Heart right ventricle (tissue), 16 donors: ENCODE measurements at regions of chr6 and their contacts with region 1.

Region 1: DNA sequence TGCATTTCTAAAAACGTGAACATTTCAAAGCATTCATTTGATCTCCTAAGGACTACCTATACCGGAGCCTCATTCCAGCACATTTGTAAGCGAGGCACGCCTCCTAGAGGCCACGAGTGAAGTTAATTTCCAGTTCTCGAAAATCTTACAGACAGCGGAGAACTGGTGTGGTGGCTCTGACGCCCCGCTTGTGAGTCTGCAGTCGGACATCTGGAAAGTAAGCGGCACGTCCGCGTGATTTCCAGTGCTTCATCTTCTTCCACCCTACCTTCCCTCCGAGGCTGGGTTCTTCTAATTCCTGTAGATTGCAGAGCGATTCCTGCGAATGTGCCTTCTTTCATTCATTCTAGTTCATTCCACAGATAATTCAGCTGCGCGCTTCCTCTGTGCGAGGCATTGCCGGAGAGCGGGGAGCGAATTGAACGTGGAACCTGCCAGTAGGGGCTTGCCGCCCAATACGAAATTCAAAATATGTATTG is 810 bp upstream of the PRIM2 start:
- DNase-seq: peak; percentile 74 to 80
- ATAC-seq: peak; percentile 91 to 97 (median 94)
- H3K4me3 ChIP-seq: peak overlapping the region; percentile 50 to 94 (median 64)
- H3K27ac ChIP-seq: peak overlapping the region; percentile 14 to 75 (median 56)
- H3K4me1 ChIP-seq: peaks cover 4 to 28% (median 17%) of the 10 kb centered on the region in 9 donors
- H3K27me3 ChIP-seq: no peaks in the 10 kb centered on the region
- CTCF ChIP-seq: peak; percentile 58 to 92 (median 81)

Region 2: GRCh38 chr6:56909115-56909900 is 407.3 kb before region 1 on chr6:
- intact Hi-C with region 1: loop called in 6 of 10 experiments (anchors 2 to 5 kb)
- DNase-seq: no peak
- ATAC-seq: no peak
- H3K4me3 ChIP-seq: no peak overlapping the region
- H3K27ac ChIP-seq: no peak overlapping the region
- H3K4me1 ChIP-seq: peaks cover 0 to 11% (median 0%) of the 10 kb centered on the region in 9 donors
- H3K27me3 ChIP-seq: no peaks in the 10 kb centered on the region
- CTCF ChIP-seq: no peak

Region 3: DNA sequence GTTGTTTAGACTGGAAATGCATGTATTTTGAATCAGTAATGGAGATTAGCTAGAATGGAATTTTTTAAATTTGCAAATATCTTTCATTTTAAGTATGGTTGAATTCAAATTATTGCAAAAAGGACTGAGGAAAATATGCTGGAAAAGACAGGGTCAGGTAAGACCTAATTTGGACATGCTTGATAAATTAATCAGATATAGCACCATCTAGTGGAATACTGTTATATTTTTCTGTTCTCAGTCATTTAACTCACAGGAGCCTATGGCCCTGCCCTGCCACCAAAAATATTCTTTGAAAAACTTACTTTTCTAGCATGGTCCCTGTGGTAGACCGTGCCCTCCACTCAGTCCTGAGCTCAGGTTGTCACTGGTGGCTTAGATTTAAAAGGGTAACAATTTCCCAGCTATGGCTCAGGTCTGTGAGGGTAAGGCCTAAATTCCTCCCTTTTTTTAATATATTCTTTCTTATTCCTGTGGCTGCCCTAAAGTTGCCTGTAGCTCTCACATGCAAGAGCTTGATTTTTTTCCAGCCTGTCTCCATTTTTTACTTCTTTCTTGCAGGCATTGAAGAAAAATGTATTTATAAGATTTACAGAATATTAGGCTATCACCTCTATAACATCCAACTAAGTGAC is 295.4 kb before region 1 on chr6:
- intact Hi-C with region 1: loop called in 4 of 10 experiments (anchors 10 kb)
- DNase-seq: no peak
- ATAC-seq: no peak
- H3K4me3 ChIP-seq: no peak overlapping the region
- H3K27ac ChIP-seq: no peak overlapping the region
- H3K4me1 ChIP-seq: no peaks in the 10 kb centered on the region
- H3K27me3 ChIP-seq: no peaks in the 10 kb centered on the region
- CTCF ChIP-seq: peak; percentile 22 to 70 (median 63)

Region 4: DNA sequence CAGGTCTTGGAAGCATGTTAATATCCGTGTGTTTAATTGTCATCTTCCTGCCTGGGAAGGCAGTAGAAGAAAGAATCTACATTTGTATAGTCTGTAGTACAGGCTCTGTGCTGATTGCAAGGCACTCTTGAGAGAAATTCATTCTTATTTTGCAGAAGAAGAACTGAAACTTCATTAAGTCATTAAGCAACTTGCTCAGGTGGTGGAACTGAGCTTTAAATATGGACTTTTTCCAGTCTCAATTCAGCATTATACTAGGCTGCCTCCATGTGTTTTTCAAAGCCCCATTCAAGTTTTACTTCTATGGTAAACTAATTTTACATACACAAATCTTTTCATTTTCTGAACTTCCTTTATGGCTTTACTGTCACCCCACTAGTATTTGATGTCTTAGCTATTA is 207.9 kb before region 1 on chr6:
- intact Hi-C with region 1: no loop called
- DNase-seq: no peak
- ATAC-seq: no peak
- H3K4me3 ChIP-seq: no peak overlapping the region
- H3K27ac ChIP-seq: no peak overlapping the region
- H3K4me1 ChIP-seq: peaks cover 0 to 32% (median 0%) of the 10 kb centered on the region in 9 donors
- H3K27me3 ChIP-seq: no peaks in the 10 kb centered on the region
- CTCF ChIP-seq: no peak

Region 5: GRCh38 chr6:57158658-57159057 is 158.0 kb before region 1 on chr6:
- intact Hi-C with region 1: loop called in 1 of 10 experiments (anchors 10 kb)
- DNase-seq: no peak
- ATAC-seq: no peak
- H3K4me3 ChIP-seq: no peak overlapping the region
- H3K27ac ChIP-seq: no peak overlapping the region
- H3K4me1 ChIP-seq: no peaks in the 10 kb centered on the region
- H3K27me3 ChIP-seq: no peaks in the 10 kb centered on the region
- CTCF ChIP-seq: no peak

Region 6: GRCh38 chr6:57221936-57222742 is 94.5 kb before region 1 on chr6 and contains the start of gene RAB23:
- intact Hi-C with region 1: loop called in 1 of 10 experiments (anchors 5 kb)
- DNase-seq: peak; percentile 83 to 88
- ATAC-seq: peak; percentile 98 to 99 (median 99)
- H3K4me3 ChIP-seq: peak within 1 kb of the TSS; percentile 90 to 99 (median 95)
- H3K27ac ChIP-seq: peak within 1 kb of the TSS; percentile 76 to 90 (median 86)
- H3K4me1 ChIP-seq: peaks cover 0 to 14% (median 5%) of the 10 kb centered on the region in 9 donors
- H3K27me3 ChIP-seq: no peaks in the 10 kb centered on the region
- CTCF ChIP-seq: peak in 4 of 9 donors; percentile 8 to 24 (median 19)
- total RNA-seq, gene RAB23: 7.6 to 16.5 (median 10.9) TPM